Activated naive CD4-positive, alpha-beta T cell treated with anti-CD3 and anti-CD28 coated beads for 36 hours (primary cell): ENCODE measurements at regions of chr19 and their contacts with region 1.

Region 1: DNA sequence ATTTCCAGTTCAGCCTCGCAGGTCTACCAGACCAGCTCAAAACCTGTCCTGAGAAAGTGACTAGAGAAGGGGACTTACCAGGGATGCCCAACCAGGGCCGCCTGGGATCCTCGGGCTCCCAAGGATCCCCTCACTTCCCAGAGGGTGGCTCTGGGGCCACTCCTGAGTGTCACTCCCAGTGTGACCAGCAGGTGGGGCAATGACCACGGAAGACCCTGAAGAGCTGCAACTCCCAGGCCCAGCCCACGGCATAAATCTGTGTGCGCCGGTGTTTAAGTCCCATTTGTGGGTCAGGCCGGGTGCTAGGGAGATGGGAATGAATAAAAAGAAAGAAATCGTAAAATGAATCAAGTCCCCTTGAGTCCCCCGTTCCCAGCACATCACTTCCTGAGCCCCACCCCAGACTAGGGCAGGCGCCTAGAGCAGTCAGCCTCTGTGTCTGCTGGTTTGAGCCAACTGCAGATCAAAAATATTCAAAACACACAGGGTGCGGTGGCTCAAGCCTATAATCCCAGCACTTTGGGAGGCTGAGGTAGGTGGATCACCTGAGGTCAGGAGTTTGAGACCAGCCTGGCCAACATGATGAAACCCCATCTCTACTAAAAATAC is 10.7 kb downstream of the PTGIR start:
- DNase-seq: peak; percentile 93
- H3K4me3 Mint-ChIP-seq: no peak overlapping the region
- H3K27ac Mint-ChIP-seq: peak overlapping the region; percentile 67
- H3K4me1 Mint-ChIP-seq: peaks cover 75% of the 10 kb centered on the region
- H3K27me3 Mint-ChIP-seq: no peaks in the 10 kb centered on the region

Region 2: GRCh38 chr19:46529622-46530462 is 84.4 kb before region 1 on chr19:
- CTCF ChIA-PET with region 1: interaction called, 7 read pairs
- intact Hi-C with region 1: loop called (anchors 1 kb)
- DNase-seq: peak; percentile 84
- H3K4me3 Mint-ChIP-seq: no peak overlapping the region
- H3K27ac Mint-ChIP-seq: peak overlapping the region; percentile 30
- H3K4me1 Mint-ChIP-seq: peaks cover 27% of the 10 kb centered on the region
- H3K27me3 Mint-ChIP-seq: no peaks in the 10 kb centered on the region

Region 3: GRCh38 chr19:46624958-46625661 is 10.9 kb after region 1 on chr19 and contains the start of gene PTGIR:
- CTCF ChIA-PET with region 1: interaction called, 10 read pairs
- intact Hi-C with region 1: no loop called
- DNase-seq: peak; percentile 78
- H3K4me3 Mint-ChIP-seq: peak within 1 kb of the TSS; percentile 90
- H3K27ac Mint-ChIP-seq: peak within 1 kb of the TSS; percentile 87
- H3K4me1 Mint-ChIP-seq: peaks cover 54% of the 10 kb centered on the region
- H3K27me3 Mint-ChIP-seq: no peaks in the 10 kb centered on the region
- total RNA-seq, gene PTGIR: 16.3 to 17.2 TPM

Region 4: DNA sequence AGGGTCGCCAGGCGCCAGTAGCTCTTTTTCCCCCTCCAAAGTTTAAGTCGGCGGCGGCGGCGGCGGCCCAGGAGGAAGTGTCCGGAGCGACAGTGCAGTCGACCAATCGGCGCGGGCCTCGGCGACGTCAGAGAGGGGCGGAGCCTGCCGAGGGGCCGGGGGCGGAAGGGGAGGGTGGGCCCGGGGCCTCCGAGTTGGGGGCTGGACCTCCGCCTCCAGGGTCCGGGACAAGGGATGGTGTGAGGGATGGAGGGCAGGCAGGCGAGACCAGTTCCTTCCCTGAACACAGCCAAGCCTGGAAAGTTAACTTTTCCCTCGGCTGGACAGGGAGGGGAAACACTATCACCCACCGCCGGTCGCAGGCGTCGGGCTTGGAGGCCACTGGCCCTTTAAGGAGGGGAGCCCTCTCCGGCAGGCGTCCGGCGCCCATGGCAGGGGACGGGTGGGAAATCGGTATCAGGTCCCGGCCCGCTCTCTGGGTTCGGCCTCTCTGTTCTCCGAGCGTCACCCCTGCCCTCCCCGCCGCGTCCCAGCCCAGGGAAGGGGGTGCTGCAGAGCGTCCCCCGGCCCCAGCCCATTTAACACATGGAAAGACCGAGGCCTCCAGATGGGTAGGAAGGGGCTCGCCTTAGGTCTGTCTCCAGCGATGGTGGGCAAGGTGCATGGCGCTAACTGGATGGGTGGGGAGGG is 103.0 kb after region 1 on chr19 and contains the start of gene PRKD2:
- CTCF ChIA-PET with region 1: no interaction called
- intact Hi-C with region 1: loop called (anchors 1 kb)
- DNase-seq: peak; percentile 93
- H3K4me3 Mint-ChIP-seq: peak within 1 kb of the TSS; percentile 96
- H3K27ac Mint-ChIP-seq: peak within 1 kb of the TSS; percentile 94
- H3K4me1 Mint-ChIP-seq: peaks cover 46% of the 10 kb centered on the region
- H3K27me3 Mint-ChIP-seq: no peaks in the 10 kb centered on the region
- total RNA-seq, gene PRKD2: 62.2 to 62.3 TPM

Region 5: GRCh38 chr19:46788262-46788967 is 174.2 kb after region 1 on chr19 and contains the start of gene SLC1A5:
- CTCF ChIA-PET with region 1: no interaction called
- intact Hi-C with region 1: loop called (anchors 1 kb)
- DNase-seq: peak; percentile 99
- H3K4me3 Mint-ChIP-seq: peak within 1 kb of the TSS; percentile 95
- H3K27ac Mint-ChIP-seq: peak within 1 kb of the TSS; percentile 99
- H3K4me1 Mint-ChIP-seq: peaks cover 38% of the 10 kb centered on the region
- H3K27me3 Mint-ChIP-seq: no peaks in the 10 kb centered on the region
- total RNA-seq, gene SLC1A5: 139 TPM